Natural killer cell (primary cell): ENCODE measurements at regions of chr16 and their contacts with region 1.

Region 1: GRCh38 chr16:15427648-15428239 is 6.6 kb upstream of the BMERB1 start:
- DNase-seq: peak; percentile 43 to 73
- ATAC-seq: peak; percentile 60 to 70 (median 69)
- H3K4me3 ChIP-seq: no peak overlapping the region
- H3K4me3 Mint-ChIP-seq: no peak overlapping the region
- H3K27ac ChIP-seq: no peak overlapping the region
- H3K27ac Mint-ChIP-seq: no peak overlapping the region
- H3K4me1 ChIP-seq: peaks cover 3% of the 10 kb centered on the region
- H3K4me1 Mint-ChIP-seq: no peaks in the 10 kb centered on the region
- H3K27me3 ChIP-seq: no peaks in the 10 kb centered on the region
- H3K27me3 Mint-ChIP-seq: peaks cover 0 to 2% of the 10 kb centered on the region in 2 donors
- CTCF ChIP-seq: peak; percentile 59

Region 2: GRCh38 chr16:15704545-15704987 is 276.8 kb after region 1 on chr16:
- intact Hi-C with region 1: loop called (anchors 2 kb)
- DNase-seq: peak; percentile 69 to 85
- ATAC-seq: peak; percentile 77 to 89 (median 82)
- H3K4me3 ChIP-seq: no peak overlapping the region
- H3K4me3 Mint-ChIP-seq: peak overlapping the region; percentile 43
- H3K27ac ChIP-seq: no peak overlapping the region
- H3K27ac Mint-ChIP-seq: peak overlapping the region; percentile 75 to 86
- H3K4me1 ChIP-seq: peaks cover 10% of the 10 kb centered on the region
- H3K4me1 Mint-ChIP-seq: peaks cover 11 to 28% of the 10 kb centered on the region in 2 donors
- H3K27me3 ChIP-seq: no peaks in the 10 kb centered on the region
- H3K27me3 Mint-ChIP-seq: no peaks in the 10 kb centered on the region
- CTCF ChIP-seq: peak; percentile 82